T-cell (primary cell): ENCODE measurements at regions of chr3 and their contacts with region 1.

Region 1: DNA sequence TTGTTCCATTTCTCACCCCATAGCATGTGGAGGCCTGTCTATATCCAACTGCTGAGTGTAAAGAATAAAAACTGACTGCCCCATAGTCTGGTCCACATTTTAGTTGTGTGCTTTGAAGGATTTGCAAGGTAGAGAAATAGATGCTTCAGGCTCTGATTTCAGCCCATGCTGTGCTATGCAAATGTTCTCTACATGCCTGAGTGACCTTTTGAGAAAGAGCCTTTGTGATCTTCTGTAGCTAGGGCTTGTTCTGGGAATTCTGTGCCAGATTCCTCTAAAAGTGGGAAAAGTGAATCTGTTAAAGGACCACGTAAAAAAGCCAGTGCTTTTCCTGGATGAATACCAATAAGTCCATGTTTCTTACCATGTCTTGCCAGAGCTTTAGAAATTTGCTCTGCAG is 5.2 kb downstream of the KCTD6 start:
- DNase-seq: no peak
- ATAC-seq: no peak
- H3K4me3 ChIP-seq: no peak overlapping the region
- H3K4me3 Mint-ChIP-seq: no peak overlapping the region
- H3K27ac ChIP-seq: no peak overlapping the region
- H3K27ac Mint-ChIP-seq: no peak overlapping the region
- H3K4me1 ChIP-seq: peaks cover 12 to 17% of the 10 kb centered on the region in 2 experiments
- H3K4me1 Mint-ChIP-seq: peaks cover 62 to 64% (median 62%) of the 10 kb centered on the region in 3 donors
- H3K27me3 ChIP-seq: no peaks in the 10 kb centered on the region
- H3K27me3 Mint-ChIP-seq: no peaks in the 10 kb centered on the region

Region 2: GRCh38 chr3:58258392-58259055 is 238.6 kb before region 1 on chr3:
- CTCF ChIA-PET with region 1: no interaction called
- POLR2A ChIA-PET with region 1: no interaction called
- DNase-seq: no peak
- ATAC-seq: no peak
- H3K4me3 ChIP-seq: no peak overlapping the region
- H3K4me3 Mint-ChIP-seq: no peak overlapping the region
- H3K27ac ChIP-seq: no peak overlapping the region
- H3K27ac Mint-ChIP-seq: no peak overlapping the region
- H3K4me1 ChIP-seq: no peaks in the 10 kb centered on the region
- H3K4me1 Mint-ChIP-seq: peaks cover 0 to 2% (median 0%) of the 10 kb centered on the region in 3 donors
- H3K27me3 ChIP-seq: no peaks in the 10 kb centered on the region
- H3K27me3 Mint-ChIP-seq: no peaks in the 10 kb centered on the region

Region 3: DNA sequence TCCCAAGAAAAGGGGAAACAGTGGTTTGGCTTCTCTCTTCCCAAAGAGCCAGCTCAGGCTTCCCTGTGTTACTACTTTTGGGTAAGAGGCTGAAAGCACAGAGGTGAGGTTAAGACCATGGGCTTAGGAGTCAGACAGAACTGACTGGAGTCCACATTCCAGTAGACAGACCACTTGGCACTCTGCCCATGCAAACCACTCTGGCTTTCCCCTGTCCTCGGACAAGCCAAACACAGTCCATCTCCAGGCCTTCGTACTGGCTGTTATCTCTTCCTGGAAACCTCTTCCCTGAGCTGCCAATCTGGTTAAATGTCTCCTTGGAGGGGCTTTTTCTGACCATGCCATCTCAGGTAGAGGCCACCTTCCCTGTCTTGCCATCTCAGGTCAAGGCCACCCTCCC is 222.6 kb after region 1 on chr3:
- CTCF ChIA-PET with region 1: interaction called in 1 of 2 experiments, 10 read pairs
- POLR2A ChIA-PET with region 1: no interaction called
- DNase-seq: no peak
- ATAC-seq: no peak
- H3K4me3 ChIP-seq: no peak overlapping the region
- H3K4me3 Mint-ChIP-seq: no peak overlapping the region
- H3K27ac ChIP-seq: no peak overlapping the region
- H3K27ac Mint-ChIP-seq: no peak overlapping the region
- H3K4me1 ChIP-seq: no peaks in the 10 kb centered on the region
- H3K4me1 Mint-ChIP-seq: no peaks in the 10 kb centered on the region
- H3K27me3 ChIP-seq: no peaks in the 10 kb centered on the region
- H3K27me3 Mint-ChIP-seq: peaks cover 0 to 8% of the 10 kb centered on the region in 2 donors